ENCODE measurements at regions of chr2 and their contacts with region 1.

Region 1: GRCh38 chr2:155377266-155377680 is 678.8 kb downstream of the KCNJ3 start:
- DNase-seq: no peak
- H3K4me3 ChIP-seq: no peak overlapping the region
- H3K27ac ChIP-seq: no peak overlapping the region
- H3K4me1 ChIP-seq: no peaks in the 10 kb centered on the region
- H3K27me3 ChIP-seq: no peaks in the 10 kb centered on the region
- CTCF ChIP-seq: peak in 2 of 3 experiments; percentile 20 to 38; a peak in 2 of 4 replicates
- EP300 ChIP-seq: no peak
- POLR2A ChIP-seq: no peak
- RAD21 ChIP-seq: peak; percentile 62 to 75

Region 2: DNA sequence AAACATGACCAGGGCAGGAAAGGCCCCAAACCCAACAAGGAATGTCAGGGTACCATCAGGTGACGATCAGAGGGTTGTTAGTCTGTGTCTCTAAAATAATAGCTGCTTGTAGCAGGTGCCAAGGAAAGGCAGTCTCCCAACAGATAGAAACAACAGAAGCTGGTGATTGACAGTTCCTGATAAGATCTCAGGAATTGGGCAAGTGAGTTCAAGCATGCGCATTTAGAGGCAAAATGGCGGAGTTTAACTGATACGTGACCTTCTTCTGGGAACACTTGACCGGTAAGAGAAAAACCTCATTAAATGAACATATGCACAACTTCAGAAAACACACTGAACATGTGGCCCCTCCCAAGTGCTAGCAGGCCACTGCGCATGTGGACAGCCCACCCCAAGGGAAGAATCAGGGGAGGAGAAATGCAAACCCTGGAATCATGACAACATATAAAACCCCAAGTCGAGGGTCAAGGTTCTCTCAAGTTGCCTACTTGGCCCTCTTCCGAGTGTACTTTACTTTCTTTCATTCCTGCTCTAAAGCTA is 13.9 kb before region 1 on chr2:
- CTCF ChIA-PET with region 1: interaction called, 10 read pairs
- POLR2A ChIA-PET with region 1: no interaction called
- DNase-seq: no peak
- H3K4me3 ChIP-seq: no peak overlapping the region
- H3K27ac ChIP-seq: no peak overlapping the region
- H3K4me1 ChIP-seq: no peaks in the 10 kb centered on the region
- H3K27me3 ChIP-seq: no peaks in the 10 kb centered on the region
- CTCF ChIP-seq: no peak
- EP300 ChIP-seq: no peak
- POLR2A ChIP-seq: no peak
- RAD21 ChIP-seq: no peak